ENCODE measurements at regions of chr5 and their contacts with region 1.

Region 1: GRCh38 chr5:122929001-122929400 is 83.6 kb downstream of the SNX24 start:
- DNase-seq: no peak
- ATAC-seq: no peak
- H3K4me3 ChIP-seq: no peak overlapping the region
- H3K27ac ChIP-seq: no peak overlapping the region
- H3K4me1 ChIP-seq: peaks cover 5% of the 10 kb centered on the region
- H3K27me3 ChIP-seq: no peaks in the 10 kb centered on the region
- CTCF ChIP-seq: no peak

Region 2: GRCh38 chr5:122984425-122984824 is 55.4 kb after region 1 on chr5:
- CTCF ChIA-PET with region 1: no interaction called
- POLR2A ChIA-PET with region 1: interaction called, 10 read pairs
- in situ Hi-C with region 1: no loop called
- intact Hi-C with region 1: no loop called
- DNase-seq: no peak
- ATAC-seq: no peak
- H3K4me3 ChIP-seq: no peak overlapping the region
- H3K27ac ChIP-seq: no peak overlapping the region
- H3K4me1 ChIP-seq: no peaks in the 10 kb centered on the region
- H3K27me3 ChIP-seq: no peaks in the 10 kb centered on the region
- CTCF ChIP-seq: no peak

Region 3: DNA sequence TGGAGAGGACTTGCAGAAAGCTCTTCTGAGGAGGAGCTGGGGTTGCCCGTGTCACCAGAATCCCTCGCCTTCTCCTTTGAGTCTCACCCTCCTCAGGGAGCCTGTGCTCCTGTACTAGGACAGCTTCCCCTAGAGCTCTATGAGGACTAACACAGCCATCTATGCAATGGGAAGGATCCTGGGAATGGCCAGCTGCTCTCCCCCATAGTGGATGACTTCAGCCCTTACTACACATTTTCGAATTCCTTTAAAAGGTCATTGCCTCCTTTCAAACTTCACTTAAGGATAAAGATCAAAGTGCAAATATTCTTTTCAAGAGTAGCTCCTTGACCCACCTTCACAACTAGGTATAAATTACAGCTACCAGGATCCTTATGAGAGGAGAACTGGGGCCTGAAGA is 215.1 kb after region 1 on chr5:
- CTCF ChIA-PET with region 1: no interaction called
- POLR2A ChIA-PET with region 1: no interaction called
- in situ Hi-C with region 1: no loop called
- intact Hi-C with region 1: no loop called
- DNase-seq: no peak
- ATAC-seq: no peak
- H3K4me3 ChIP-seq: no peak overlapping the region
- H3K27ac ChIP-seq: no peak overlapping the region
- H3K4me1 ChIP-seq: no peaks in the 10 kb centered on the region
- H3K27me3 ChIP-seq: no peaks in the 10 kb centered on the region; the same call in 1 of the 2 replicates
- CTCF ChIP-seq: no peak

Measured in Panc1 (cell line).